ENCODE measurements at regions of chr5 and their contacts with region 1.

Region 1: DNA sequence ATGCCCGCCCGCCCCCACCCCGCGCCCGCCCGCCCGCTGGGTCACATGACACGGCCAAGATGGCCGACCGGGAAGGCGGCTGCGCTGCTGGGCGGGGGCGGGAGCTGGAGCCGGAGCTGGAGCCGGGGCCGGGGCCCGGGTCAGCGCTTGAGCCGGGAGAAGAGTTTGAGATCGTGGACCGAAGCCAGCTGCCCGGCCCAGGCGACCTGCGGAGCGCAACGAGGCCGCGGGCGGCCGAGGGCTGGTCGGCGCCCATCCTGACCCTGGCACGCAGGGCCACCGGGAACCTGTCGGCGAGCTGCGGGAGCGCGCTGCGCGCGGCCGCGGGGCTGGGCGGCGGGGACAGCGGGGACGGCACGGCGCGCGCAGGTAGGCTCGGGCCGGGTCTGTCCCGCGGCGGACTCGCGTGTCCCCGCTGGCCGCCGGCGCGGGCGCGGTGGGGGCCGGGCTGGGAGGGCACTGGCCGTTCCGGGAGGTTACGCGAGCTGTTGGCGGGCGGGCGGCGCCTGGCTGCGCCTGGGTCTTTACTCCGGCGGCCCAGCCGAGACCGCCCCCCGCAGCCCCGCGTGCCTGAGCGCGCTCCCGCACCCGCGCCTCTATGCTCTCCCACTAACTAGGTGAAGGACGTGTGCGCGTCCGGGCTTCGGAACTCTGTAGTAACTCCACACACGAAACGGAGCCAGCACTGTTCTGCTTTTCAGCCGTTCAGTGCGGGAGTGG is at the start of gene RUFY1:
- DNase-seq: peak; percentile 85
- H3K4me3 ChIP-seq: peak within 1 kb of the TSS; percentile 71 to 89 (median 79)
- H3K27ac ChIP-seq: peak within 1 kb of the TSS; percentile 80
- H3K4me1 ChIP-seq: peaks cover 19% of the 10 kb centered on the region
- H3K27me3 ChIP-seq: no peaks in the 10 kb centered on the region
- CTCF ChIP-seq: no peak
- POLR2A ChIP-seq: peak; percentile 69
- total RNA-seq, gene RUFY1: 43.3 and 44.9 TPM in 2 replicates

Region 2: GRCh38 chr5:179568721-179569120 is 18.1 kb after region 1 on chr5:
- CTCF ChIA-PET with region 1: no interaction called
- POLR2A ChIA-PET with region 1: no interaction called
- dilution Hi-C with region 1: no loop called
- intact Hi-C with region 1: no loop called
- DNase-seq: peak; percentile 90
- H3K4me3 ChIP-seq: no peak overlapping the region
- H3K27ac ChIP-seq: peak overlapping the region; percentile 4
- H3K4me1 ChIP-seq: peaks cover 9% of the 10 kb centered on the region
- H3K27me3 ChIP-seq: no peaks in the 10 kb centered on the region
- CTCF ChIP-seq: no peak
- POLR2A ChIP-seq: no peak

Region 3: DNA sequence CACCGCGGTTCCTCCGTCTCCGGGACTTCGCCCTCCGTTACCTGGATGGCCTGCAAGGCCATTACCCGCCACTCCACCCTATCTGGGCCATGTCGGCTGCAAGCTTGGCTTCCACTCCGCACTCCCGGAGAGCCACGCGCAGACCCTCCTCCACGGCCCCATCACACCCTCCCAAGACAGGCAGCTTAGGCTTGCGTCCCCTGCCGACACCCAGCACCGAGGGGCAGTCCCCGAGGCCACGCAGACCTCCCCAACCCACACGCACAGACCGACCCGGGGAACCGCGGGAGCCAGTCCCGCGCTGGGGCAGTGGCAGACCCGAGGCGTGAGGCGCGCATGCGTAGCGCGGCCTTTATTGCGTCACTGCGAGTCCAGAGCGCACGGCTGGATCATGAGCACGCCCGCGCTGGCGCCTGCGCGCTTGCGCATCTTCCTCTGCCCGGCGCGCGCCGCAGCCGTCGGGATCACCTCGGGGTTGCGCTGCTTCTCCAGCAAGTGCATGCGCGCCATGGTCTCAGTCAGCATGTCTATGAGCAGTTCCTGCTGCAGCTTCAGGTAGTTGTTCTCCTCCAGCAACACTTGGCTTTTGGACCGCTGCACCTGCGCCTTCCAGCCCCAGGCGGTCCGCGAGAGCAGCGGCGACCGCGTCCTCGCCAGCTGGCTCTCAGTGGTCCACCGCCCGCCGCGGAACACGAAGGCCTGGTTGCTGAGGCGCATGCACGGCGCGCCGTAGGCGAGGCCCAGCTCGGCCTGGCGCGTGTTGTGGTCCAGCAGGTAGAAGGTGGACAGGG is 127.7 kb after region 1 on chr5:
- CTCF ChIA-PET with region 1: no interaction called
- POLR2A ChIA-PET with region 1: no interaction called
- dilution Hi-C with region 1: no loop called
- intact Hi-C with region 1: loop called (anchors 5 kb)
- DNase-seq: peak; percentile 96
- H3K4me3 ChIP-seq: peak overlapping the region; percentile 62 to 64 (median 63)
- H3K27ac ChIP-seq: peak overlapping the region; percentile 35
- H3K4me1 ChIP-seq: no peaks in the 10 kb centered on the region
- H3K27me3 ChIP-seq: no peaks in the 10 kb centered on the region
- CTCF ChIP-seq: no peak
- POLR2A ChIP-seq: peak; percentile 98

Measured in endothelial cell of umbilical vein (primary cell).